ENCODE measurements at regions of chr10 and their contacts with region 1.

Region 1: DNA sequence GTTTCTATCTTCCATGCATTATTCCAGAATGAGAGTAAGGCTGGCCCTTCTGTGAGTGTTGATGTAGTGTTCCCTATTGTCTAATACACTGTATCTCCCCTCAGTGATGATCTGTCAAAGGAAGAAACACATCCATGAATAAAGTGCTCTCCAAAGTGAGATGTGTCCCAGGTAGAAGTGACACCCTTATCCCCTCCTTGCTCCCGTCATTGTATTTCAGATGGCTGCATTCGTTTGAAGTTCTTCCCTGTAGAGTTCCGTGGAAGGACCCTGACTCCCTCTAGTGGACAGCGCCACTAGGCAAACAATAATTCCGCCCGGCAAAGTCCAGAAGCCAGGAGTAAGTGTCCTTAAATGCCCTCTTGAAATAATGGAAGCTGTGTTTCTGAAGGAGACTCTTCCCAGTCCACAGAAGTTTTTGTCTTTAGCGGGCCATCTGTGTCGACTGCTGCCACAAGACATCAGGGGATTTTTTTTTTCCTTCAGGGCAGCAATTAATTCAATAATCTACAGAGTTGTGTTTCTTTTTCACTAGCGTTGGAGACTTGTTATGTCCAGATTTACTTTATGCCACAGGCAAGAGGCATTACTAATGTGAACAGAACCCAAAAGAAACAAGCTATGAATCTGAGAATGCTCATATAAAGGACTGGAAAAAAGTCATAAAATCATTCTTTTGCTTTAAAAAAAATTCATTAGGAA is 64.6 kb downstream of the THNSL1 start:
- DNase-seq: peak; percentile 30
- ATAC-seq: peak; percentile 90
- H3K4me3 ChIP-seq: no peak overlapping the region
- H3K27ac ChIP-seq: no peak overlapping the region
- H3K4me1 ChIP-seq: peaks cover 4% of the 10 kb centered on the region; the same call in 1 of the 2 replicates
- H3K27me3 ChIP-seq: no peaks in the 10 kb centered on the region; a peak in 1 of 4 replicates
- CTCF ChIP-seq: peak; percentile 90 to 92 (median 91)
- EP300 ChIP-seq: no peak
- POLR2A ChIP-seq: no peak
- RAD21 ChIP-seq: peak; percentile 96

Region 2: DNA sequence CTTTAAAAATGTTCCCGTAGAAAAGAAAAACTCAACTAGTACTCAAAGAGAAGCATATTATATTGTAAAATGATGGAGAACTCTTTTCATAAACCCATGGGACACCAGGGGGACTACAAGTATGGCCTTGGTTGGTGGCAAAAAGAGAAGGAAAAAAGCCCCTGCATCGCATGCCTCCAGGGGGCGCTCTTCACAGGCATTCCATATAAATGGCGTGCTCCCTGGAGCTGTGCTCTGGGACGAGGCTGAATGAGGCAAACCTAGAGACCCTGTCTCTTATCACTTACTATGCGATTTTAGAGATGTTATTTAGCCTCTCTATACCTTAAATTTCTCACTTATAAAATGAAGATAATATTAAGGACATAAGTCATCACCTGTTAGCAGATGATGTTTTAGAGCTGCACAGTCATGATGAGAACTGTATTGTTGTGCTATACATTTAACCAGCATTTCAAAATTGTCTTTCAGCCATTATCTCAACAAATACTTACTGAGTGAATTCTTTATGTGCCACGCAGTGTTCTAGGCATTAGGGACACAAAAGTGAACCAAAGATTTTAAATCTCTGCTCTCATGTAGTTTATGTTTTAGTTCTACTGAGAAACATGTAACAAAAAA is 463.1 kb before region 1 on chr10:
- CTCF ChIA-PET with region 1: interaction called, 110 read pairs
- POLR2A ChIA-PET with region 1: interaction called, 3 read pairs
- RAD21 ChIA-PET with region 1: interaction called, 48 read pairs
- SMC1A ChIA-PET with region 1: interaction called, 77 read pairs
- in situ Hi-C with region 1: no loop called
- intact Hi-C with region 1: loop called (anchors 2 kb)
- DNase-seq: no peak
- ATAC-seq: peak; percentile 88
- H3K4me3 ChIP-seq: no peak overlapping the region
- H3K27ac ChIP-seq: no peak overlapping the region
- H3K4me1 ChIP-seq: no peaks in the 10 kb centered on the region
- H3K27me3 ChIP-seq: no peaks in the 10 kb centered on the region
- CTCF ChIP-seq: peak; percentile 73 to 84 (median 80)
- EP300 ChIP-seq: no peak
- POLR2A ChIP-seq: no peak
- RAD21 ChIP-seq: peak; percentile 56

Region 3: DNA sequence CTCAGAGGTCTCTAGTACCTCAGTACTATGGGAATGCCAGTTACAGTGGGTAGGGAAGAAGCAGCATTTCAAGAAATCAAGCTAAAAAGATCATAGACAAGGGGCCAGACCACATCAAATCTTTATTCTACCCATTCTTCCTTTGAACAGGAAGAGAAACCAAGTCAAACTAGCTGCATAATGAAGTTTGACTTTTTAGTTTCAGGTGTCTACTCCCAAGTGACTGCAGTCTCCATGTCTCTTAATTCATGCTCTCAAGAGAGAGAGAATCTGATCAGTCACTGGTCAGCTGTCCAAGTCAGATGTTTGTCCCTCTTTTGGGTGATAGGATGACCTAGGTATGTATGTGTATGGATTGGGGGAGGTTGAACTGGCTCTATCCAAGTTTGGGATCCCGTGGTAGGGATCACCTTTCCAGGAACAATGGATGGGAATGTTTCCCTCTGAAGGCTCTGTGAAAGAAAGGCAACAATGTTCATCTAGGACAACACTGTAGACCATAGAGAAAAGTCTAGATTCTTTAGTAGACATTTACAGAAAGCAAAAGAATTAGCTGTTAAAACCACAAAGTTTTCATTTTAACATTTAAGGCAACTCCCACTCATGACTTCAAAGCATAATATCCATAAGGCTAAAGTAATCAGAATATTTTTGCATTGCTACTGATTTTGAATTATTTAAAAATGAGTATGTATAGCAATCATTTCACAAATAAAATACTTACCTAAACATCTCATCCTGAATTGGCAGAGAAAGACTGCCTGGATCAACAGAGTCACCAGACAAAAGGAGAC is 98.5 kb before region 1 on chr10:
- CTCF ChIA-PET with region 1: interaction called, 11 read pairs
- POLR2A ChIA-PET with region 1: no interaction called
- RAD21 ChIA-PET with region 1: interaction called, 7 read pairs
- SMC1A ChIA-PET with region 1: interaction called, 34 read pairs
- in situ Hi-C with region 1: no loop called
- intact Hi-C with region 1: no loop called
- DNase-seq: peak; percentile 42
- ATAC-seq: peak; percentile 31; the same call in 2 of the 3 replicates
- H3K4me3 ChIP-seq: no peak overlapping the region
- H3K27ac ChIP-seq: no peak overlapping the region
- H3K4me1 ChIP-seq: peaks cover 4% of the 10 kb centered on the region
- H3K27me3 ChIP-seq: no peaks in the 10 kb centered on the region
- CTCF ChIP-seq: no peak
- EP300 ChIP-seq: no peak
- POLR2A ChIP-seq: no peak
- RAD21 ChIP-seq: no peak

Region 4: GRCh38 chr10:25016376-25017154 is 64.5 kb before region 1 on chr10 and contains the start of gene THNSL1:
- CTCF ChIA-PET with region 1: interaction called, 6 read pairs
- POLR2A ChIA-PET with region 1: no interaction called
- RAD21 ChIA-PET with region 1: interaction called, 5 read pairs
- SMC1A ChIA-PET with region 1: interaction called, 6 read pairs
- in situ Hi-C with region 1: no loop called
- intact Hi-C with region 1: loop called (anchors 10 kb)
- DNase-seq: peak; percentile 90
- ATAC-seq: peak; percentile 98
- H3K4me3 ChIP-seq: peak within 1 kb of the TSS; percentile 81
- H3K27ac ChIP-seq: peak within 1 kb of the TSS; percentile 80
- H3K4me1 ChIP-seq: peaks cover 4% of the 10 kb centered on the region
- H3K27me3 ChIP-seq: no peaks in the 10 kb centered on the region
- CTCF ChIP-seq: no peak
- EP300 ChIP-seq: no peak
- POLR2A ChIP-seq: peak; percentile 94
- RAD21 ChIP-seq: no peak
- polyA plus RNA-seq, gene THNSL1: 5.8 to 6.1 TPM

Region 5: DNA sequence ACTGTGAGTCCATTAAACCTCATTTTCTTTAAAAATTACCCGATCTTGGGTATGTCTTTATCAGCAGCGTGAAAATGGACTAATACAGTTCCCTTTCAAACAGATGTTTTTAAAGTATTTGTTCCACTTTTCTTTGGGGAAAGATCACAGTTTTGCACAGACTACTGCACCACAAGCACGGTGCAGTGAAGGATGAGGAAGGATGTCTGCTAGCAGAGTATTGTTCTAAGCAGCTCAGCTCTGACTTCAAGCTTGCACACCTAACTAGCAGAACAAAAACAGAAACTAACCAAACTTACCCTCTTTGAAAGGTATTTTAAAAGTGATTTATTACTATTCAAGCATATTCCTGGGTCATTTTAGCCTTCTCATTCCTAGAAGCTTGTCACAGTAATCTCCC is 44.6 kb before region 1 on chr10:
- CTCF ChIA-PET with region 1: interaction called, 5 read pairs
- POLR2A ChIA-PET with region 1: no interaction called
- RAD21 ChIA-PET with region 1: interaction called, 18 read pairs
- SMC1A ChIA-PET with region 1: interaction called, 19 read pairs
- in situ Hi-C with region 1: no loop called
- intact Hi-C with region 1: no loop called
- DNase-seq: peak; percentile 12
- ATAC-seq: peak; percentile 87
- H3K4me3 ChIP-seq: no peak overlapping the region
- H3K27ac ChIP-seq: no peak overlapping the region
- H3K4me1 ChIP-seq: no peaks in the 10 kb centered on the region
- H3K27me3 ChIP-seq: no peaks in the 10 kb centered on the region; a peak in 1 of 4 replicates
- CTCF ChIP-seq: no peak
- EP300 ChIP-seq: no peak
- POLR2A ChIP-seq: no peak
- RAD21 ChIP-seq: no peak

Region 6: DNA sequence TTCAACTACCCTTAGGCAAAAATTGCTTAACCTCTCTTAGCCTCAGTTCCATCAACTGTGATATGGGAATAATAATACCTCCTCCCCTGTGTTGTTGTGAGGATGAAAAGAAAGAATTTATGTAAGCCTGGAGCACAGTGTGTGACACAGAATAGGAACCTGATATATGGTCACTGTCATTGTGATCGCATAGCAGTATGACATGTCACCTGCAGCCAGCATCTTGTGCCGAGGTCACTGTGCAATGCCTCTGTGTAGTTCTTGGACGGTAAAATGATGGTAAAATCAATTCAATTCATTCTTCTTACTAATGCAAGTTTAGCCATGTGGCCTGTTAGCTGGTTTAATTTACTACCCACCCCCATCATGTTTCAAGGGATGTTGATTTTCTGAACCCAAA is 39.2 kb after region 1 on chr10:
- CTCF ChIA-PET with region 1: no interaction called
- POLR2A ChIA-PET with region 1: no interaction called
- RAD21 ChIA-PET with region 1: no interaction called
- SMC1A ChIA-PET with region 1: no interaction called
- in situ Hi-C with region 1: no loop called
- intact Hi-C with region 1: no loop called
- DNase-seq: no peak
- ATAC-seq: no peak
- H3K4me3 ChIP-seq: no peak overlapping the region
- H3K27ac ChIP-seq: no peak overlapping the region
- H3K4me1 ChIP-seq: no peaks in the 10 kb centered on the region
- H3K27me3 ChIP-seq: no peaks in the 10 kb centered on the region
- CTCF ChIP-seq: no peak
- EP300 ChIP-seq: no peak
- POLR2A ChIP-seq: no peak
- RAD21 ChIP-seq: no peak

Measured in GM12878 (cell line).